ENCODE measurements at regions of chr6 and their contacts with region 1.

Region 1: DNA sequence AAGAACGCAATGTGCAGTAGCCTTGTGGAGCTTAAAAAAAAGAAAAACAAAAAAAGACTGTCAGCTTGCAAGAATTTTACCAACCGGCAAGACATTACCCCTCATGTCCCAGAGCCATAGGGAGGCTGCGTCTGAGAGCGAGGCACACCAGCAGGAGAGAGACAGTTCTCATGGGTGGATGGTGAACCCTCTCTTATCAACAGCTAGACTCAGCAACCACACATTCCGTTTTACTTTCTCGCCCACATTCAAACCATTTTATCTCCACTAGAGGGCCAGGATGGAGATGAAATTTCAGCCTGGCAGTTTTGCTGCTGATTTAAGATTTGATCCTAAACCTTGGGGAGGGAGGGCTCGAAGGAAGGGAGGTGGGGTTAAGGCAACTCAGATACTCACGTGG is 247.0 kb downstream of the ATXN1 start:
- DNase-seq: peak; percentile 41
- H3K4me3 Mint-ChIP-seq: no peak overlapping the region
- H3K27ac Mint-ChIP-seq: peak overlapping the region; percentile 24
- H3K4me1 Mint-ChIP-seq: peaks cover 78% of the 10 kb centered on the region
- H3K27me3 Mint-ChIP-seq: no peaks in the 10 kb centered on the region

Region 2: GRCh38 chr6:16332175-16332542 is 182.1 kb before region 1 on chr6:
- CTCF ChIA-PET with region 1: interaction called, 20 read pairs
- POLR2A ChIA-PET with region 1: interaction called, 3 read pairs
- DNase-seq: peak; percentile 83
- H3K4me3 Mint-ChIP-seq: no peak overlapping the region
- H3K27ac Mint-ChIP-seq: no peak overlapping the region
- H3K4me1 Mint-ChIP-seq: peaks cover 3% of the 10 kb centered on the region
- H3K27me3 Mint-ChIP-seq: no peaks in the 10 kb centered on the region

Region 3: GRCh38 chr6:16420715-16421461 is 93.4 kb before region 1 on chr6:
- CTCF ChIA-PET with region 1: interaction called, 10 read pairs
- POLR2A ChIA-PET with region 1: interaction called, 4 read pairs
- DNase-seq: peak; percentile 49
- H3K4me3 Mint-ChIP-seq: peak overlapping the region; percentile 29
- H3K27ac Mint-ChIP-seq: peak overlapping the region; percentile 99
- H3K4me1 Mint-ChIP-seq: peaks cover 55% of the 10 kb centered on the region
- H3K27me3 Mint-ChIP-seq: no peaks in the 10 kb centered on the region

Region 4: GRCh38 chr6:16481697-16482399 is 32.4 kb before region 1 on chr6:
- CTCF ChIA-PET with region 1: interaction called, 12 read pairs
- POLR2A ChIA-PET with region 1: interaction called, 18 read pairs
- DNase-seq: peak; percentile 80
- H3K4me3 Mint-ChIP-seq: peak overlapping the region; percentile 46
- H3K27ac Mint-ChIP-seq: peak overlapping the region; percentile 94
- H3K4me1 Mint-ChIP-seq: peaks cover 94% of the 10 kb centered on the region
- H3K27me3 Mint-ChIP-seq: no peaks in the 10 kb centered on the region

Region 5: DNA sequence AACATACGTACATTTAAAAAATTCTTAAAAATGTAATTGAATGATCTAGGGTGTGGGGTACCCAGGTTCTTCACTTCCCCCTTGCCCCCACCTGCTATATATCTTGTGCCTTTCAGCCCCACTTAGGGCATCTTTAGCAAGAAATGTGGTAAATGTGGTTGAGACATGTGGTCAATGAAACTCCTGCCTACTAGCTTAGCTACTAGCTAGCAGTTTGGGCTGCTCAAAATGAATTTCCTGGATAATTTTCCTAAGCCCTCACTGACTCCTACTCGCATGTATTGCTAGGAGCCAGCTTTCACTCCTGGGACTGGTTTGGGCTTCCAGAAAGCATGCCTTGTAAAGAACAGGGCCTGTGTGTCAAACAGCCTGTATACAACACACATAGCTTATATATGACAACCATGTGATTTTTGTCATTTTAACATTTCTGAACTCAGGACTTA is 10.3 kb before region 1 on chr6:
- CTCF ChIA-PET with region 1: interaction called, 13 read pairs
- POLR2A ChIA-PET with region 1: interaction called, 5 read pairs
- DNase-seq: no peak
- H3K4me3 Mint-ChIP-seq: no peak overlapping the region
- H3K27ac Mint-ChIP-seq: no peak overlapping the region
- H3K4me1 Mint-ChIP-seq: peaks cover 37% of the 10 kb centered on the region
- H3K27me3 Mint-ChIP-seq: no peaks in the 10 kb centered on the region

Region 6: GRCh38 chr6:16704401-16705045 is 190.3 kb after region 1 on chr6:
- CTCF ChIA-PET with region 1: interaction called, 13 read pairs
- POLR2A ChIA-PET with region 1: interaction called, 6 read pairs
- DNase-seq: peak; percentile 71
- H3K4me3 Mint-ChIP-seq: peak overlapping the region; percentile 80
- H3K27ac Mint-ChIP-seq: peak overlapping the region; percentile 89
- H3K4me1 Mint-ChIP-seq: peaks cover 79% of the 10 kb centered on the region
- H3K27me3 Mint-ChIP-seq: no peaks in the 10 kb centered on the region

Region 7: DNA sequence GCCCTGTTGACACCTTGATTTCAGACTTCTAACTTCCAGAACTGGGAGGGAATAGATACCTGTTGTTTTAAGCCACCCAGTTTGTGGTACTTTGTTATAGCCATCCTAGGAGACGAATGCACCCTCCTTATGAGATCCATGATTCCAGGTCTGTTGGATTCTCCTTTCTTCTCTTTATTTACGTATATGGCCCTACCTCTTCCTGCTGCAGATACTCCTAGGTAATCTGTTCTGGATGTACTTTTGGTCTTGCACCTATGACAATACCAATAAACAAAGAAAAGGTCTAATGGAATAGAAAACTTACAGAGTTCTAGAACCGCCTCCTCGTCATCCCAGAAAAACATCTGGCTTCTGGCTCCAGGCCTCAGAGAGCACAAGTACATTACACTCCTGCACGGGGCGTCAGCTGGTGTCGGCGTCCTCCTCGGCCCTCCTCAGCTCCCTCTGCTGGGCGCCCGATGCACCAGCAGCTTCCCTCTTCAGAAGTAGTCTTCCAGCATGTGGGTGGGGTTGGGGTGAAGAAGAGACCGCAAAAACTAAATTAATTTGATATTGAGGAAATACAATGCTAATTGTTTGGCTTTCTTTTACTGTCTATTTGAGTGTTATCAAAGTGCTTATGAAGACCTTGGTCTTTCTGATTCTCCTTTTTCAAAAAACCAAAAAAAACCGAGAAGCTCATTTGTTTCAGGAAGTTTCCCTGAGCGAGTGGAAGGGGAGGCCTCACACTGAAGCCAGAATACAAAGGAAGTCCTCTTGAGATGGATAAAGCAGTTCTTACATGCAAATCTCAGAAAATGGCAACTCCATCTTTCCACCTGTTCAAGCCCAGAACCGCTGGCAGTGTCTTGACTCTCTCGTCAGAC is 256.7 kb after region 1 on chr6:
- CTCF ChIA-PET with region 1: interaction called, 86 read pairs
- POLR2A ChIA-PET with region 1: interaction called, 3 read pairs
- DNase-seq: peak; percentile 79
- H3K4me3 Mint-ChIP-seq: no peak overlapping the region
- H3K27ac Mint-ChIP-seq: no peak overlapping the region
- H3K4me1 Mint-ChIP-seq: peaks cover 57% of the 10 kb centered on the region
- H3K27me3 Mint-ChIP-seq: no peaks in the 10 kb centered on the region

Measured in activated CD4-positive, alpha-beta memory T cell treated with anti-CD3 and anti-CD28 coated beads, Interleukin-2, amount 10 ng/mL, durations not matched to agents 7 days and 5 days (primary cell).